Dorsolateral prefrontal cortex (tissue), 120 donors: ENCODE measurements at regions of chr5 and their contacts with region 1.

Region 1: GRCh38 chr5:97102010-97102470 is 40.4 kb downstream of the LIX1 start:
- DNase-seq: no peak
- H3K4me3 ChIP-seq: peak overlapping the region in 18 of 59 donors; percentile 4 to 56 (median 26)
- H3K27ac ChIP-seq: peak overlapping the region in 58 of 59 donors; percentile 31 to 97 (median 89)
- H3K27me3 ChIP-seq: no peaks in the 10 kb centered on the region
- CTCF ChIP-seq: no peak

Region 2: DNA sequence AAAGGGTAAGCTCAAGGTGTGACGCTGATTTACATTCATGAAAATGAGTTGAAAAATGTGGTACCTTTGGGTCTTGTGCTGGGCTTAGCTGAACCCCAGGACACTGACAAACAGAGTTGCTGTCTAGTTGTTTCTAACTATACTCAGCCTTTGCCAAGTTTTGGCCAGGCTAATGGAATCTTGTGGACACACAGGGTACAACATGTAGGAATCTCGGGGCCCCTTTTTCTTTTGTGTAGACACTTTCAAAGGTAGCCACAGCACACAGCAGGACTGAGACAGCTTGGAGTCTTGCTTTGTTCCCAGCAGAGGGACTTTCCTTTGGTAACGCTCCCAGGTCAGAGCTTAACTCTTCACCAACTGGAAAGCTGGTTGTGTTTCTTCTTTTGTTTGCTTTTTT is 32.6 kb after region 1 on chr5:
- intact Hi-C with region 1: loop called in 1 of 2 experiments (anchors 5 kb)
- DNase-seq: no peak
- H3K4me3 ChIP-seq: no peak overlapping the region
- H3K27ac ChIP-seq: no peak overlapping the region
- H3K27me3 ChIP-seq: no peaks in the 10 kb centered on the region
- CTCF ChIP-seq: no peak

Region 3: GRCh38 chr5:97629276-97629675 is 527.2 kb after region 1 on chr5:
- intact Hi-C with region 1: no loop called
- DNase-seq: peak in 6 of 10 donors; percentile 17 to 53 (median 44)
- H3K4me3 ChIP-seq: no peak overlapping the region
- H3K27ac ChIP-seq: peak overlapping the region in 21 of 59 donors; percentile 4 to 79 (median 56)
- H3K27me3 ChIP-seq: no peaks in the 10 kb centered on the region
- CTCF ChIP-seq: no peak